Testis (tissue), 5 donors: ENCODE measurements at regions of chr19 and their contacts with region 1.

Region 1: GRCh38 chr19:13861732-13862531 is 15.0 kb upstream of the NANOS3 start:
- DNase-seq: peak; percentile 95
- H3K4me3 ChIP-seq: peak overlapping the region; percentile 36 to 58
- H3K27ac ChIP-seq: peak overlapping the region; percentile 74 to 94
- H3K4me1 ChIP-seq: peaks cover 11% of the 10 kb centered on the region
- H3K27me3 ChIP-seq: no peaks in the 10 kb centered on the region
- CTCF ChIP-seq: peak; percentile 99
- POLR2A ChIP-seq: no peak

Region 2: GRCh38 chr19:13784731-13785452 is 77.0 kb before region 1 on chr19:
- intact Hi-C with region 1: loop called (anchors 10 kb)
- DNase-seq: peak; percentile 70
- H3K4me3 ChIP-seq: no peak overlapping the region
- H3K27ac ChIP-seq: no peak overlapping the region
- H3K4me1 ChIP-seq: peaks cover 19% of the 10 kb centered on the region
- H3K27me3 ChIP-seq: no peaks in the 10 kb centered on the region
- CTCF ChIP-seq: peak; percentile 40 to 46 (median 44)
- POLR2A ChIP-seq: no peak